ENCODE measurements at regions of chr20 and their contacts with region 1.

Region 1: GRCh38 chr20:3888622-3889488 is at the start of gene PANK2:
- DNase-seq: peak; percentile 93 to 99 (median 96)
- ATAC-seq: peak; percentile 95
- H3K4me3 ChIP-seq: peak within 1 kb of the TSS; percentile 90
- H3K4me3 Mint-ChIP-seq: peak within 1 kb of the TSS; percentile 98
- H3K27ac ChIP-seq: peak within 1 kb of the TSS; percentile 80 to 85
- H3K27ac Mint-ChIP-seq: peak within 1 kb of the TSS; percentile 94
- H3K4me1 ChIP-seq: peaks cover 38% of the 10 kb centered on the region
- H3K4me1 Mint-ChIP-seq: peaks cover 67% of the 10 kb centered on the region
- H3K27me3 ChIP-seq: no peaks in the 10 kb centered on the region
- H3K27me3 Mint-ChIP-seq: no peaks in the 10 kb centered on the region
- CTCF ChIP-seq: no peak
- total RNA-seq, gene PANK2: 49.0 to 51.1 TPM

Region 2: DNA sequence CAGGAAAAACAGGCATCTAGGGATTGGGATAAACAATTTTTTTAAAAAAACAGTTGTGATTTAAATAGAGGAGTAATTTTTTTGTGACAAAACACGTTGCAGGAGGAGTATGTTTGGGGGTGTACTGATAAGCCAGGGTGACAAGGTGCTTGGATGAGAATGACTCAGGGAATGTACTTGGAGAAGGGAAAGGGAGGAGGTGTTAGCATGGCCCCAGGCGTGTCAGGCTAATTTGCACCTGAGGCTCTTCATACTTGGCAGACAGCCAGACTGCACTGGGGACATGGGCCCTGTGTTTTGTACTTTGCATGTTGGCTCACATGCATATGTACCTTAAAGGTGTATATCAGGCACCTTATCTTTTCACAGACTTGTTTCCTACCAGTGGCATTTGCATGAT is 23.1 kb after region 1 on chr20:
- CTCF ChIA-PET with region 1: interaction called, 3 read pairs
- POLR2A ChIA-PET with region 1: interaction called, 5 read pairs
- intact Hi-C with region 1: loop called in 1 of 2 experiments (anchors 1 kb)
- DNase-seq: no peak
- ATAC-seq: no peak
- H3K4me3 ChIP-seq: no peak overlapping the region
- H3K4me3 Mint-ChIP-seq: no peak overlapping the region
- H3K27ac ChIP-seq: no peak overlapping the region
- H3K27ac Mint-ChIP-seq: no peak overlapping the region
- H3K4me1 ChIP-seq: peaks cover 6% of the 10 kb centered on the region
- H3K4me1 Mint-ChIP-seq: peaks cover 42% of the 10 kb centered on the region
- H3K27me3 ChIP-seq: no peaks in the 10 kb centered on the region
- H3K27me3 Mint-ChIP-seq: no peaks in the 10 kb centered on the region
- CTCF ChIP-seq: no peak

Region 3: DNA sequence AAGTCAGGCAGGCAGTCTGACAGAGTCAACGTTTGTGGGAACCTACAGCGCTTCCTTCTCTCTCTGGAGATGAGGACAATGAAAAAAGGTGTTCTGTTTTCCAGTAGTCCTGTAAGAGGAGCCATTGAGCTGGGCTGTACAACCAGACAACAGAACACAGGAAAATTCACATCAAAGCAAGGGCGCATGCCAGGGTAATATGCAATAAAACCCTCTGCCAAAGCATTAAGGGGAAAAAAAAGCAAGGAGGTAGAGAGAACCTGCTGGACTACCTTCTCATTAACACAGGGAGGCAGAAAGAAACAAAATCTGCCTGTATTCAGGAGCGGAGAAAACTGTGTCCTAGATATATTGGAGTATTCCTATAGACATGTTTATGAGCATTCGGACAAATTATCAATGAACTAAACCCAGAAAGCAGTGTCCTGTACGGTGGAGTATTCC is 125.2 kb after region 1 on chr20:
- CTCF ChIA-PET with region 1: no interaction called
- POLR2A ChIA-PET with region 1: interaction called, 4 read pairs
- intact Hi-C with region 1: loop called (anchors 2 to 10 kb)
- DNase-seq: peak in 6 of 14 experiments; percentile 23 to 77 (median 56)
- ATAC-seq: peak; percentile 33
- H3K4me3 ChIP-seq: peak overlapping the region; percentile 70
- H3K4me3 Mint-ChIP-seq: peak overlapping the region; percentile 90
- H3K27ac ChIP-seq: peak overlapping the region in 1 of 2 donors; percentile 4
- H3K27ac Mint-ChIP-seq: peak overlapping the region; percentile 79
- H3K4me1 ChIP-seq: peaks cover 28% of the 10 kb centered on the region
- H3K4me1 Mint-ChIP-seq: peaks cover 37% of the 10 kb centered on the region
- H3K27me3 ChIP-seq: no peaks in the 10 kb centered on the region
- H3K27me3 Mint-ChIP-seq: no peaks in the 10 kb centered on the region
- CTCF ChIP-seq: peak; percentile 71

Region 4: DNA sequence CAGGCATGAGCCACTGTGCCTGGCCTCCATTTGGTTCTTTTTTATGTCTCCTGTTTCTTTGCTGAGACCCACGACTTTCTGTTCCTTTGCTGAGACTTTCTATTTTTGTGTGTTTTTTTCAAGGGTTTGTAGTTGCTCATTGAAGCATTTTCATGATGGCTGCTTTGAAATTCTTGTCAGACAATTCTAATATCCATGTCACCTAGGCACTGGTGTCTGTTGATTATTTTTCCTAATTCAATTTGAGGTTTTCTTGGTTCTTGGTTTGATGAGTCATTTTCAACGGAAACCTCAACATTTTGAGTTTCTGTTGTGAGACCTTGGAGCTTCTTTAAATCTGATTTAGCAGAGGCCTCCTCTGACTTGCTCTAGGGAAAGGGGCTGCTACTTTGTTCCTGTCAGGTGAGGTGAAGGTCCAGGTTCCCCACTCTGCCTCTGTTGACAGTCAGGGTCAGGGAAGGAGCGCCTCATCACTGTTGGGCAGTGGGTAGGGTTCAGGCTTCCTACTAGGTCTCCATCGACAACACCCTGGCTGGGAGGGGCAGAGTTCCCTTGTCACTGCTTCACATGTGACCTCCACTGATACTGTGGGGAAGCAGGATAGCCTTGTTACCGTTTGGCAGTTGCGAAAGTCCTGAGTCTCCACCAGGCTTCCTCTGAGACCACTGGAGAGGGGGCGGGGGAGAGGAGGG is 193.7 kb after region 1 on chr20:
- CTCF ChIA-PET with region 1: interaction called, 10 read pairs
- POLR2A ChIA-PET with region 1: interaction called, 5 read pairs
- intact Hi-C with region 1: loop called (anchors 2 kb)
- DNase-seq: peak; percentile 15 to 80 (median 38)
- ATAC-seq: peak; percentile 69
- H3K4me3 ChIP-seq: peak overlapping the region; percentile 28
- H3K4me3 Mint-ChIP-seq: peak overlapping the region; percentile 0
- H3K27ac ChIP-seq: peak overlapping the region in 1 of 2 donors; percentile 72
- H3K27ac Mint-ChIP-seq: peak overlapping the region; percentile 72
- H3K4me1 ChIP-seq: peaks cover 38% of the 10 kb centered on the region
- H3K4me1 Mint-ChIP-seq: peaks cover 42% of the 10 kb centered on the region
- H3K27me3 ChIP-seq: no peaks in the 10 kb centered on the region
- H3K27me3 Mint-ChIP-seq: no peaks in the 10 kb centered on the region
- CTCF ChIP-seq: no peak

Measured in CD4-positive, alpha-beta T cell (primary cell).